PC-9 (cell line): ENCODE measurements at regions of chr21 and their contacts with region 1.

Region 1: DNA sequence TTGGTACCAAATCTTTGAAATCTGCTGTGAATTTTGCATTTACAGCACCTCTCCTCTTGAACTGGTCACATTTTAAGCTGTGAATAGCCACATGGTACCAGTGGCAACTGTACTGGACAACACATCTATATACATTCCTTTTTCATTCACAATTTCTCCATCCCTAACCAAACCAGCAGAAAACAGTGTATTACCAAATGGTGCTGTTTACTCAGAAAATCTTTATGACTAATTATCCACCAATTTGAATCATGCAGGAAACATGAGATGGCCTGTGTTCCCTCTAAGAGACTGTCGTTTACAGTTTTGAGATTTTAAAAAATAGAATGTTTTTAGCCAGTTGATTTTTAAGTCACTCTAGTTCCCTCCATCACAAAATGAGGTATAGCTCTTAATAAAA is 17.6 kb upstream of the CCT8 start:
- DNase-seq: peak in 1 of 2 experiments; percentile 67
- H3K4me3 ChIP-seq: no peak overlapping the region
- H3K27ac ChIP-seq: no peak overlapping the region
- H3K4me1 ChIP-seq: peaks cover 16% of the 10 kb centered on the region
- H3K27me3 ChIP-seq: no peaks in the 10 kb centered on the region
- CTCF ChIP-seq: no peak

Region 2: DNA sequence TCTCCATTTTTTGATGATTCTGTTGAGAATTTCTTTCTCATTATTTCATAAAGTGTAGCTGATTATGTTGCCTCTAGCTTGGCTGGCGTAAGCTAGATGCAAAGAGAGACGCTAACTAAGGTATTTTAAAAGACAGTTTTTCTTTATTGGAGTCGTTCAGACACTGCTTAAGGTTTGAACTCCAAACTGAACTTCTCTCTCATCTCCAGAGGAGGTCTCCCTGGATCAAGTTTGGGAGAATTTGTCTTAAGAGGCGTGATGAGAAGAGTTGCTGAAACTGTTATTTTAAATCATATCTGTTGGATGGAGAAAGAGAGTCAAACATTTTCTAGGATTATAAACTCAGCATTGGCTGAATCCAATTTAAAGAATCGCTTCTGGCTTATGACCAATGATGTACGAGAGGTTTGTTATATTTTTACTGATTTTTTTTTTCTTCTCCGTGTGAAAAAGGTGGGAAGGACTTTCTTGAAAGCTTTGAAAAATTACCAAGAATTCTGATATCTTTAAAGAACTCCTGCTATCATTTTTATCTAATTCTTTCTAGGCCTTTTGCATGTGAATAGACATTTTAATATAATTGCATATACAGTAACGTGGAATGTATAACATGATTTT is 73.4 kb after region 1 on chr21:
- CTCF ChIA-PET with region 1: interaction called, 10 read pairs
- POLR2A ChIA-PET with region 1: no interaction called
- intact Hi-C with region 1: loop called (anchors 2 kb)
- DNase-seq: peak in 1 of 2 experiments; percentile 60
- H3K4me3 ChIP-seq: no peak overlapping the region
- H3K27ac ChIP-seq: no peak overlapping the region
- H3K4me1 ChIP-seq: peaks cover 26% of the 10 kb centered on the region
- H3K27me3 ChIP-seq: no peaks in the 10 kb centered on the region
- CTCF ChIP-seq: peak; percentile 75

Region 3: DNA sequence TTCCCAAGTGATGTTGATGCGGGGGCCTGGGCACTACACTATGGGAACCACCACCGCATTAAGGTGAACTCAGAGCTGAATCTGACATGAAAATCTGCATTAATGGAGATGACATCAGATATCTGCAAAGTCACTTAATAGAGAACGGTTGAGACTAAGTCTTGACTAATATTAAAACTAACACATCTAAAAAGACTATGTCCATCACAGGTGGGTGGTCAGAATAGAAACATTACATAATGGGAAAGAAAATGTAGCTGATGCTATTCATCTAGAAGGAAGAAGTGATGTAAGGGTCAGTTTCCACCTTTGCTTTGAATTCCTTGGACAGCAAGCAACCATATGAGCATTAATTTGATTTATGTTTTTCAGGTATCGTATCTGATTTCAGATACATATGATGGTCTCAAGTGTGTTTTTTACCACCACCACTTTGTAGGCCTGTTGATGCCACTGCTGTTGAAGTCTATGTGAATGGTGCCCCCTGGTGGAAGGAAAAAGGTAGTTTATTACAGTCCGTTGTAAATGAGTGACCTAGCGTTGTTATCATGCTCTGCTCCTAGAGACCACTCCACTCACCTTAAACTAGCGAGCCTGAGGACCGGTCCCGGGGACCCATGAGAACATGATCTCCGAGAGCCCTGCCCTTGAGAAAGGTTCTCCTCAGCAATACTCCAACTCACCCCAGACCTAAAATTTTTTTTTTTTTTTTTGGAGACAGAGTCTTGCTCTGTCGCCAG is 281.2 kb after region 1 on chr21:
- CTCF ChIA-PET with region 1: interaction called, 5 read pairs
- POLR2A ChIA-PET with region 1: no interaction called
- intact Hi-C with region 1: loop called (anchors 1 kb)
- DNase-seq: peak; percentile 28 to 51
- H3K4me3 ChIP-seq: no peak overlapping the region
- H3K27ac ChIP-seq: no peak overlapping the region
- H3K4me1 ChIP-seq: no peaks in the 10 kb centered on the region
- H3K27me3 ChIP-seq: no peaks in the 10 kb centered on the region
- CTCF ChIP-seq: peak; percentile 78

Region 4: DNA sequence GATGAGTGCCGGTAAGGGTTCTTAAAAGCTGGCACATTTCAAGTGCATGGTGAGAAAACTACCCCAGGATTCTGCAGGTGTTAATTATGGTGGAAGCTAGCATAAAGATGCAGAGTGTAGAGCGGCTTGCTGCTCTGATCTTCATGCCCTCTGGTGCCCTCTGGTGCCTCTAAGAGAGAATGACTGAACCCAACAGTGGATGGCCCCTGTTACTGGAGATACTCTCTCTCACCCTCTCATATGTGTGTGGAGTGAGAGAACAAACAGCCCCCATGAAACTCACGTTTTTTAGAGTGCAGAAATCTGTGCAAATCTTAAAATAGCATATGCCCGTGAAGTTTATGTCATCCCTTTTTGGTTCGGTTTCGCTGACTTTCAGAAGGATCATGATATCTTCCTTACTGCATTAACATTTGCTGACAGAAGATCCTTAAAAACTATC is 758.7 kb after region 1 on chr21:
- CTCF ChIA-PET with region 1: no interaction called
- POLR2A ChIA-PET with region 1: no interaction called
- intact Hi-C with region 1: loop called (anchors 2 kb)
- DNase-seq: peak in 1 of 2 experiments; percentile 22
- H3K4me3 ChIP-seq: no peak overlapping the region
- H3K27ac ChIP-seq: no peak overlapping the region
- H3K4me1 ChIP-seq: no peaks in the 10 kb centered on the region
- H3K27me3 ChIP-seq: no peaks in the 10 kb centered on the region
- CTCF ChIP-seq: peak; percentile 75

Region 5: DNA sequence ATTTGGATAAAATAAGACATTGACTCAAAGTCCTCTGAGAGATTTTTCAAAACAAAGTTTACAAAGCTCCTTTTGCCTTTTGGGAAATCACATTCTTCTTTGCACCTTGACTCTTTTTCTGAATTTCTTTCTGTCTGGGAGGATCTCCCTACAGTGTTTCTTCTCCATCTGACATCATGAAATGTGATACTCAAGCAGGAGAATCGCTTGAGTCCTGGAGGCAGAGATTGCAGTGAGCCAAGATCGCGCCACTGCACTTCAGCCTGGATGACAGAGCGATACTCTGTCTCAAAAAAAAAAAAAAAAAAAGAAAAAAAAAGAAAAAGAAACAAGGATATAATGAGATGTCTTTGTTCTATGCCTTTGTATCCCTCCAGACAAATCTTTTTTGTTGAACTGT is 862.0 kb after region 1 on chr21:
- CTCF ChIA-PET with region 1: no interaction called
- POLR2A ChIA-PET with region 1: no interaction called
- intact Hi-C with region 1: no loop called
- DNase-seq: no peak
- H3K4me3 ChIP-seq: no peak overlapping the region
- H3K27ac ChIP-seq: no peak overlapping the region
- H3K4me1 ChIP-seq: no peaks in the 10 kb centered on the region
- H3K27me3 ChIP-seq: no peaks in the 10 kb centered on the region
- CTCF ChIP-seq: no peak